Heart right ventricle (tissue), 16 donors: ENCODE measurements at regions of chr9 and their contacts with region 1.

Region 1: DNA sequence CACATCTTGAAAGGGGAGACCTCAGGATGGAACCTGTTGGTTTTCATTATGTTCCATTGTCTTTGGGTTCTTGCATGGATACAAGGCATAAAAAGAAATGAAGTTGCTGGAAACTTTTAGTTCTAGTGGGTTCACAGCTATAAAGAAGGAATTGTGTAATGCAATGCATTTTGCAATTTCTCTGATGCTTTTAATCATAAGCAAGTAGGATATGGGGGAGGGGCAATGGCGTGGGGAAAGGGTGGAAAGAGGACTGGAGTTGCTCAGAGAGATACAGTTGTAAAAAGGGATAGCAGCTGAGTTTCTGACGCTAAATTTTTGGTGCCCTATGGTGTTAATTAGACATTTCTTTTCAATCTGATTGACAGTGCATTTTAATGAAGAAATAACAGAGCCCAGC is 88.6 kb upstream of the FANCC start:
- DNase-seq: no peak
- ATAC-seq: no peak
- H3K4me3 ChIP-seq: no peak overlapping the region
- H3K27ac ChIP-seq: no peak overlapping the region
- H3K4me1 ChIP-seq: peaks cover 0 to 14% (median 0%) of the 10 kb centered on the region in 9 donors
- H3K27me3 ChIP-seq: no peaks in the 10 kb centered on the region
- CTCF ChIP-seq: no peak

Region 2: GRCh38 chr9:95389373-95389772 is 16.7 kb before region 1 on chr9:
- intact Hi-C with region 1: loop called in 1 of 10 experiments (anchors 1 kb)
- DNase-seq: no peak
- ATAC-seq: no peak
- H3K4me3 ChIP-seq: no peak overlapping the region
- H3K27ac ChIP-seq: no peak overlapping the region
- H3K4me1 ChIP-seq: no peaks in the 10 kb centered on the region
- H3K27me3 ChIP-seq: peaks cover 0 to 7% (median 0%) of the 10 kb centered on the region in 7 donors
- CTCF ChIP-seq: no peak